A549 (cell line): ENCODE measurements at regions of chr17 and their contacts with region 1.

Region 1: GRCh38 chr17:7656958-7657609 is 6.4 kb downstream of the ATP1B2 start:
- DNase-seq: peak in 1 of 2 experiments; percentile 36
- ATAC-seq: peak in 1 of 2 experiments; percentile 15; a peak in 1 of 6 replicates
- H3K4me3 ChIP-seq: no peak overlapping the region
- H3K27ac ChIP-seq: no peak overlapping the region
- H3K4me1 ChIP-seq: no peaks in the 10 kb centered on the region
- CTCF ChIP-seq: no peak
- EP300 ChIP-seq: no peak
- POLR2A ChIP-seq: no peak
- RAD21 ChIP-seq: no peak

Region 2: DNA sequence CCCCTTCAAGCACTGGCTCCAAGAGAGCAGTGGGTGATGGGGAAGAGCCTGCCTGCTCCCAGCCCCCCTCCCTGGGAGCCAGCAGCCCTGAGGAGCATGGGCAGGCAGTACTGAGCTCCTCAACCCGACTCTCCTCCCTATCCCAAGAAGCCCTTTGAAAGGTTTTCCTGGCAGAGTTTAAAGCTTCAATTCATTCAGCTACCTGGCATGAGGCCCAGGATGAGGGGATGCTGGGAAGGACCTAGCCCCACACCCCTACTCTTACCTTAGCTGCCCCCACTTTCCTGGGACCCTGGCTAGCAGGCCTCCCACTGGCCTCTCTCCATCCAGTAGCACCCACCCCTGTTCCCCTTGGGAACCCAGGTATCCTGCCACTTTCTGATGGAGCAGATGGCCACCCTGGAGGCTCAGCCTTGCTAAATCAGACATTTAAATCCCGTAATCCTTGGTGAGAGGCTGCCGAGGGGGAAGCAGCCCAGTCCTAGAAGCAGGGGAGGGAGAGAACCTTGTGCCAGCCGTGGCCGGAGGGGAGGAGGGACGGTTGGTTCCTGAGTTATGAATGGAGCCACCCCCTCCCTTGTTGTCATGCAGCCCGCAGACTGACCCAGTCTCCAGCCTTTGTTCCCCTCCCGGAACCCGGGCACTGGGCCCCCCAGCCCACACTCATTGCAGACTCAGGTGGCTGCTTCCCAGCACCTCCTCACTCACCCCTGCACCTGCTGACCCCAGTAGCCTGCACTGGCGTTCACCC is 10.7 kb after region 1 on chr17:
- CTCF ChIA-PET with region 1: interaction called, 13 read pairs
- POLR2A ChIA-PET with region 1: no interaction called
- DNase-seq: no peak
- ATAC-seq: peak; percentile 51 to 57; a peak in 4 of 6 replicates
- H3K4me3 ChIP-seq: no peak overlapping the region
- H3K27ac ChIP-seq: no peak overlapping the region
- H3K4me1 ChIP-seq: no peaks in the 10 kb centered on the region
- CTCF ChIP-seq: no peak
- EP300 ChIP-seq: no peak
- POLR2A ChIP-seq: no peak
- RAD21 ChIP-seq: no peak

Region 3: DNA sequence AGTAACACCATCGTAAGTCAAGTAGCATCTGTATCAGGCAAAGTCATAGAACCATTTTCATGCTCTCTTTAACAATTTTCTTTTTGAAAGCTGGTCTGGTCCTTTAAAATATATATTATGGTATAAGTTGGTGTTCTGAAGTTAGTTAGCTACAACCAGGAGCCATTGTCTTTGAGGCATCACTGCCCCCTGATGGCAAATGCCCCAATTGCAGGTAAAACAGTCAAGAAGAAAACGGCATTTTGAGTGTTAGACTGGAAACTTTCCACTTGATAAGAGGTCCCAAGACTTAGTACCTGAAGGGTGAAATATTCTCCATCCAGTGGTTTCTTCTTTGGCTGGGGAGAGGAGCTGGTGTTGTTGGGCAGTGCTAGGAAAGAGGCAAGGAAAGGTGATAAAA is 16.2 kb after region 1 on chr17:
- CTCF ChIA-PET with region 1: interaction called, 13 read pairs
- POLR2A ChIA-PET with region 1: no interaction called
- DNase-seq: peak in 1 of 2 experiments; percentile 64
- ATAC-seq: peak in 1 of 2 experiments; percentile 27; a peak in 2 of 6 replicates
- H3K4me3 ChIP-seq: no peak overlapping the region
- H3K27ac ChIP-seq: no peak overlapping the region
- H3K4me1 ChIP-seq: no peaks in the 10 kb centered on the region
- CTCF ChIP-seq: peak; percentile 47
- EP300 ChIP-seq: no peak
- POLR2A ChIP-seq: no peak
- RAD21 ChIP-seq: peak; percentile 43 to 59